ENCODE measurements at regions of chr17 and their contacts with region 1.

Region 1: DNA sequence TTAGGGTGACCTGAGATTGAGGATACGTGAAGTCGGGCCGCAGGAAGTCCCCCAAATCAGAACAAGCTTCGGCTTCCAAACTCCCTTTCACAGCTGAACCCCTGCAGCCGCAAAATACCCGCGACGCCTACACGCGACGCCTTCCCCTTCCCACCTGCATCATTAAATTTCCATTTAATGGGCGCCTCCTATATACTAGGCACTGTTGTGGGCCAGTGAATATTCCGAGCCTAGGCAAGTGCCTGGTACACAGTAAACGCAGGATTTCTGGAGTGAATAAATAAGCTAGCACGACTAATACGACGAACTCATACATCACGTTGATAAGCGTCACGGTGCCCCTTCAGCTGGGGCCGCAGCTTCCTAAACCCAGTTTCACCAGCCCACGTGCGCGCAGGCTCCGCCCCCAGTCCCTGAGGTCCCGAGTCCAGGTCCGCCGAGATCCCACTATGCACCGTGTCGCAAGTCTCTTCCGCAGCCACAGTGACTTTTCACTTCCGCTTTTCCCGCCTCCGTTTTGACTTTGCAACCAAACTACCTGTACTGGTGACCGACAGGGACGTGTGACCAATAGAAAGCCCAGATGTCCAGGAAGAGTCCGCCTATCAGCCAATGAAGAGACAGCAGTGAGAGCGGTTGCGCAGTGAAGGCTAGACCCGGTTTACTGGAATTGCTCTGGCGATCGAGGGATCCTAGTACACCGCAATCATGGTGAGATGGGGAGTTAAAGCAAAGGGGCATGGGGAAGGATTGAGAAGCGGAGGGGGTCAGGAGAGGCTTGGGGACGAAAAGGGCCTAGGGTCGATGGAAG is at the start of gene PSMB3:
- DNase-seq: peak; percentile 95 to 99 (median 97)
- H3K4me3 ChIP-seq: peak within 1 kb of the TSS; percentile 81 to 94
- H3K4me3 Mint-ChIP-seq: peak within 1 kb of the TSS; percentile 95 to 100 (median 99)
- H3K27ac ChIP-seq: peak within 1 kb of the TSS; percentile 84
- H3K27ac Mint-ChIP-seq: peak within 1 kb of the TSS; percentile 93 to 100 (median 98)
- H3K4me1 ChIP-seq: peaks cover 57% of the 10 kb centered on the region
- H3K4me1 Mint-ChIP-seq: peaks cover 25 to 57% (median 43%) of the 10 kb centered on the region in 4 donors
- H3K27me3 ChIP-seq: peaks cover 24% of the 10 kb centered on the region
- H3K27me3 Mint-ChIP-seq: peaks cover 7 to 16% of the 10 kb centered on the region in 2 donors
- total RNA-seq, gene PSMB3: 93.5 to 99.0 TPM

Region 2: GRCh38 chr17:38572669-38573365 is 179.5 kb before region 1 on chr17:
- CTCF ChIA-PET with region 1: no interaction called
- POLR2A ChIA-PET with region 1: no interaction called
- intact Hi-C with region 1: no loop called
- DNase-seq: peak in 1 of 5 donors; percentile 37
- H3K4me3 ChIP-seq: no peak overlapping the region
- H3K4me3 Mint-ChIP-seq: peak overlapping the region in 7 of 8 donors; percentile 18 to 75 (median 64)
- H3K27ac ChIP-seq: no peak overlapping the region
- H3K27ac Mint-ChIP-seq: no peak overlapping the region
- H3K4me1 ChIP-seq: peaks cover 5% of the 10 kb centered on the region
- H3K4me1 Mint-ChIP-seq: peaks cover 0 to 13% (median 2%) of the 10 kb centered on the region in 4 donors
- H3K27me3 ChIP-seq: peaks cover 51% of the 10 kb centered on the region
- H3K27me3 Mint-ChIP-seq: peaks cover 66 to 83% of the 10 kb centered on the region in 2 donors

Region 3: GRCh38 chr17:38674749-38675615 is 77.3 kb before region 1 on chr17 and contains the start of gene EPOP:
- CTCF ChIA-PET with region 1: interaction called, 10 read pairs
- POLR2A ChIA-PET with region 1: interaction called, 6 read pairs
- intact Hi-C with region 1: loop called (anchors 5 kb)
- DNase-seq: peak; percentile 68 to 82 (median 74)
- H3K4me3 ChIP-seq: peak within 1 kb of the TSS in 1 of 2 donors; percentile 52
- H3K4me3 Mint-ChIP-seq: peak within 1 kb of the TSS; percentile 39 to 82 (median 73)
- H3K27ac ChIP-seq: peak within 1 kb of the TSS; percentile 9
- H3K27ac Mint-ChIP-seq: peak within 1 kb of the TSS in 4 of 7 donors; percentile 31 to 47 (median 40)
- H3K4me1 ChIP-seq: peaks cover 11% of the 10 kb centered on the region
- H3K4me1 Mint-ChIP-seq: peaks cover 5 to 25% (median 11%) of the 10 kb centered on the region in 4 donors
- H3K27me3 ChIP-seq: peaks cover 12% of the 10 kb centered on the region
- H3K27me3 Mint-ChIP-seq: peaks cover 17 to 30% of the 10 kb centered on the region in 2 donors
- total RNA-seq, gene EPOP: 0.09 to 0.25 TPM

Region 4: GRCh38 chr17:38729886-38730525 is 22.3 kb before region 1 on chr17 and contains the start of gene CISD3:
- CTCF ChIA-PET with region 1: interaction called, 8 read pairs
- POLR2A ChIA-PET with region 1: interaction called, 38 read pairs
- intact Hi-C with region 1: loop called (anchors 1 kb)
- DNase-seq: peak; percentile 82 to 89 (median 87)
- H3K4me3 ChIP-seq: peak within 1 kb of the TSS; percentile 67 to 83
- H3K4me3 Mint-ChIP-seq: peak within 1 kb of the TSS; percentile 92 to 99 (median 97)
- H3K27ac ChIP-seq: peak within 1 kb of the TSS; percentile 72
- H3K27ac Mint-ChIP-seq: peak within 1 kb of the TSS; percentile 94 to 99 (median 97)
- H3K4me1 ChIP-seq: peaks cover 87% of the 10 kb centered on the region
- H3K4me1 Mint-ChIP-seq: peaks cover 45 to 93% (median 71%) of the 10 kb centered on the region in 4 donors
- H3K27me3 ChIP-seq: no peaks in the 10 kb centered on the region
- H3K27me3 Mint-ChIP-seq: no peaks in the 10 kb centered on the region
- total RNA-seq, gene CISD3: 12.5 to 13.5 TPM

Region 5: DNA sequence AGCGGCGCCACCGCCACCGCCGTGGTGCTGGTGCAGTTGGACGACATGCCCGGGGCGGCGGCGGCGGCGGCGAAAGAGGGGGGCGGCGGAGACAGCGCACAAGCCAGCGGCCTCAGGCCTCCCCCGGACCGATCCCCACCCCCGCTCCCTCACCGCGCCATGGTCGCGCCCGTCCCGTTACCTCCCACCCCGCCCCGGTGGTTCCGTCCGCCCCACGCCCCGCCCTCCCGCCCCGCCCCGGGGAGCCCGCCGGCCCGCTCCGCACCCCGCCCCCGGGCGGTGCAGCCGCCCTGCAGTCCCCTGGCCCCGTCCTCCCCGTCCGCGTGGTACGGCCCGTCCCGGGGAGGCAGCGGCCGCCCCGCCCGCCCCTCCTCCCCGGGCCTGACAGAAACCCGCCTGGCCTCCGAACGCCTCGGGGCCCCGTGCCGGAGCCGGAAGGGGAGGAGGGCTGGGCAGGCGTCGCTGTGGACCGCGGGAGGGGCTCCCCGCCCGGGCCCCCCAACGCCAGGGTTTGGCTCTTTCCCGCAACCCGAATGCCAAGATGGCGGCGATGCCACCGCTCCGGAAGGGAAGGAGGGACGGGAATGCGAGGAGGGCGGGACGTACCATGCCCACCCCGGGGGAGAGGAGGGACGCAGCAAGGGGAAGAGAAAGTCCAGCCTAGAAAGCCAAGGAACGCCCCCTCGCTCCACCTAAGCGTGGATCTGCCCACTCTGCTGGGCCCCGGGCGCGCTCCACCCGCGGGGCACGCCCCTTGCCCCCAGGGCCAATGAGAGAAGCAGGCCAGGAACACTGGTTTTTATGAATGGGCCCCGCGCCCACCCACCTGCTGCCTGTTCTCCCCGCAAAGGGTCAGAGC is 47.3 kb after region 1 on chr17 and contains the start of gene PIP4K2B:
- CTCF ChIA-PET with region 1: no interaction called
- POLR2A ChIA-PET with region 1: interaction called, 15 read pairs
- intact Hi-C with region 1: loop called (anchors 1 kb)
- DNase-seq: peak; percentile 81 to 88 (median 83)
- H3K4me3 ChIP-seq: peak within 1 kb of the TSS; percentile 76 to 84
- H3K4me3 Mint-ChIP-seq: peak within 1 kb of the TSS; percentile 91 to 98 (median 94)
- H3K27ac ChIP-seq: peak within 1 kb of the TSS; percentile 76
- H3K27ac Mint-ChIP-seq: peak within 1 kb of the TSS; percentile 89 to 96 (median 93)
- H3K4me1 ChIP-seq: peaks cover 27% of the 10 kb centered on the region
- H3K4me1 Mint-ChIP-seq: peaks cover 30 to 46% (median 36%) of the 10 kb centered on the region in 4 donors
- H3K27me3 ChIP-seq: no peaks in the 10 kb centered on the region
- H3K27me3 Mint-ChIP-seq: no peaks in the 10 kb centered on the region
- total RNA-seq, gene PIP4K2B: 55.9 to 66.3 TPM

Region 6: DNA sequence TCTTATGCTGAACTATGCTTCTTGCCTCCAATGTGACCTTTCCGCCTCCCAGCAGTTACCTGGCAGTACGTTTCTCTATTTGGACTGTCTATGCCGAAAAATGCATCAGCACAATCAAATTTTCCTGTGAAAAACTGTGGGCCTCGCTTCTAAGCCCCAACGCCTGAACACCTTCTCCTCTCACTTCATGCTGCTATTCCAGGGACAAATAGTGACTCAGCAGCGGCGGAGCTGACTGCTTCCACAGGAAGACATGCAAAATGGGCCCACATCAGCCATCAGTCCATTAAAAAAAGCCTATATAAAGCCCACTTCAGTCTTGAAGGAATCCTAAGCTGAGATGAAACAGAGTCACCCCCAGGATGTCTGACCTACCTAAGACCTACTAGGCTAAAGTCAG is 57.5 kb after region 1 on chr17:
- CTCF ChIA-PET with region 1: no interaction called
- POLR2A ChIA-PET with region 1: no interaction called
- intact Hi-C with region 1: no loop called
- DNase-seq: no peak
- H3K4me3 ChIP-seq: no peak overlapping the region
- H3K4me3 Mint-ChIP-seq: no peak overlapping the region
- H3K27ac ChIP-seq: no peak overlapping the region
- H3K27ac Mint-ChIP-seq: no peak overlapping the region
- H3K4me1 ChIP-seq: no peaks in the 10 kb centered on the region
- H3K4me1 Mint-ChIP-seq: peaks cover 0 to 2% (median under 1%) of the 10 kb centered on the region in 4 donors
- H3K27me3 ChIP-seq: no peaks in the 10 kb centered on the region
- H3K27me3 Mint-ChIP-seq: no peaks in the 10 kb centered on the region

Region 7: GRCh38 chr17:38824899-38825761 is 72.8 kb after region 1 on chr17 and contains the start of gene CWC25:
- CTCF ChIA-PET with region 1: no interaction called
- POLR2A ChIA-PET with region 1: interaction called, 6 read pairs
- intact Hi-C with region 1: loop called (anchors 2 kb)
- DNase-seq: peak; percentile 94 to 99 (median 97)
- H3K4me3 ChIP-seq: peak within 1 kb of the TSS; percentile 71 to 89
- H3K4me3 Mint-ChIP-seq: peak within 1 kb of the TSS; percentile 94 to 99 (median 98)
- H3K27ac ChIP-seq: peak within 1 kb of the TSS; percentile 98
- H3K27ac Mint-ChIP-seq: peak within 1 kb of the TSS; percentile 99 to 100 (median 100)
- H3K4me1 ChIP-seq: peaks cover 23% of the 10 kb centered on the region
- H3K4me1 Mint-ChIP-seq: peaks cover 15 to 42% (median 30%) of the 10 kb centered on the region in 4 donors
- H3K27me3 ChIP-seq: no peaks in the 10 kb centered on the region
- H3K27me3 Mint-ChIP-seq: peaks cover 0 to 5% of the 10 kb centered on the region in 2 donors
- total RNA-seq, gene CWC25: 44.4 to 46.8 TPM

Region 8: DNA sequence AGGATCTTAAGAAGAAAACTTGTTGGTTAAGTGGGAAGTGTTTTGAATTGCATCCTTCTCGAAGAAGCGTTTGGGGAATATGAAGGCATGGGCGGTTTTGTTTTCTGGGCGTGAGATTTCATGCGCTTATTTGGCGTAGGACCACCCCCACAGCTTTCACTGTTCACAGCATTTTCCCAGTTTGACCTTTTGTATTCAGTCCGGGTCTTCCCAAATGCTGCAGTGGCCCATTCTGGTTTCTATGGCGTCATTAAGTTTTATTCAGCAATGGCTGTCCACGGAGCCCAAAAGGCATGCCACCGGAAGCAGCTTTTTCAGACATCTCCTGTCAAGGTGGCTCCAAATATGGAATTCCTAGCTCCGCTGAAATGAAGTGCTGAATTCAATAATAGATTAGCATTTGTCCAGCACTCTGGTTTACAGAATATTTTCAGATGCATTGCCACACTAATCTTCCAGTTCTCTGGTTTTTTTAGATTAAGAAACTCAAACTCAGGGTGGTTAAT is 305.4 kb after region 1 on chr17:
- CTCF ChIA-PET with region 1: no interaction called
- POLR2A ChIA-PET with region 1: no interaction called
- intact Hi-C with region 1: loop called (anchors 1 kb)
- DNase-seq: no peak
- H3K4me3 ChIP-seq: peak overlapping the region in 1 of 2 donors; percentile 64
- H3K4me3 Mint-ChIP-seq: peak overlapping the region in 7 of 8 donors; percentile 77 to 88 (median 84)
- H3K27ac ChIP-seq: no peak overlapping the region
- H3K27ac Mint-ChIP-seq: peak overlapping the region in 1 of 7 donors; percentile 66
- H3K4me1 ChIP-seq: no peaks in the 10 kb centered on the region
- H3K4me1 Mint-ChIP-seq: peaks cover 2 to 20% (median 6%) of the 10 kb centered on the region in 4 donors
- H3K27me3 ChIP-seq: no peaks in the 10 kb centered on the region
- H3K27me3 Mint-ChIP-seq: no peaks in the 10 kb centered on the region

Measured in CD4-positive, alpha-beta memory T cell (primary cell).